ENCODE measurements at regions of chr1 and their contacts with region 1.

Region 1: DNA sequence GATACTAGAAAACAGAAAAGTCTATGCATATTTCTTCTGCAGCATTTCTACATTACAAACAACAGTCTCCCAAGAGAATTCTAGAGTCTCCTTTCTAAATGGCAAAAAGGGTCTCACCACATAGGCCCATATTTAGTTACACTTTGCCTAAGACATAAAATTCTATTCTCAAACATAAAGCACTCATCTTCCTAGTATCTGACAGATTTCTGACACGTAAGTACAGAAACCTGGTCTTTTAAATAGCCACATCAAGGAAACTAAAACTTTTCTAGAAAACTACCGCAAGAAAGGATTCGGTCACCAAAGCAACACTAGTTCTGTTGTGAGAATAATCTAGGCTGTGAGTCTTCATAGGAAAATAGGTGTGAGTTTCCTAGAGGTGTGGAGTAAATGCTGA is 33.6 kb upstream of the CTSK start:
- DNase-seq: no peak
- ATAC-seq: peak; percentile 54
- H3K4me3 ChIP-seq: no peak overlapping the region
- H3K27ac ChIP-seq: no peak overlapping the region
- H3K4me1 ChIP-seq: no peaks in the 10 kb centered on the region
- H3K27me3 ChIP-seq: no peaks in the 10 kb centered on the region
- CTCF ChIP-seq: no peak
- EP300 ChIP-seq: no peak
- POLR2A ChIP-seq: no peak
- RAD21 ChIP-seq: no peak

Region 2: GRCh38 chr1:150876119-150876454 is 34.5 kb after region 1 on chr1:
- CTCF ChIA-PET with region 1: no interaction called
- POLR2A ChIA-PET with region 1: interaction called, 3 read pairs
- RAD21 ChIA-PET with region 1: no interaction called
- SMC1A ChIA-PET with region 1: interaction called, 3 read pairs
- in situ Hi-C with region 1: no loop called
- intact Hi-C with region 1: loop called (anchors 5 kb)
- DNase-seq: no peak
- ATAC-seq: peak; percentile 72
- H3K4me3 ChIP-seq: peak overlapping the region; percentile 79
- H3K27ac ChIP-seq: peak overlapping the region; percentile 54
- H3K4me1 ChIP-seq: peaks cover 4% of the 10 kb centered on the region; the same call in 1 of the 2 replicates
- H3K27me3 ChIP-seq: no peaks in the 10 kb centered on the region
- CTCF ChIP-seq: no peak
- EP300 ChIP-seq: no peak
- POLR2A ChIP-seq: no peak
- RAD21 ChIP-seq: no peak